Heart right ventricle (tissue), 16 donors: ENCODE measurements at regions of chr1 and their contacts with region 1.

Region 1: GRCh38 chr1:227542143-227543120 is 20.9 kb upstream of the ZNF678 start:
- DNase-seq: peak; percentile 84 to 91
- ATAC-seq: peak; percentile 95 to 97 (median 97)
- H3K4me3 ChIP-seq: peak overlapping the region; percentile 45 to 88 (median 76)
- H3K27ac ChIP-seq: peak overlapping the region; percentile 2 to 78 (median 68)
- H3K4me1 ChIP-seq: peaks cover 0 to 17% (median 12%) of the 10 kb centered on the region in 9 donors
- H3K27me3 ChIP-seq: peaks cover 0 to 7% (median 0%) of the 10 kb centered on the region in 7 donors
- CTCF ChIP-seq: peak; percentile 95 to 99 (median 99)

Region 2: GRCh38 chr1:227576189-227576588 is 33.8 kb after region 1 on chr1:
- intact Hi-C with region 1: loop called in 1 of 10 experiments (anchors 2 kb)
- DNase-seq: no peak
- ATAC-seq: peak in 3 of 8 donors; percentile 20 to 37 (median 35)
- H3K4me3 ChIP-seq: no peak overlapping the region
- H3K27ac ChIP-seq: no peak overlapping the region
- H3K4me1 ChIP-seq: peaks cover 0 to 16% (median 4%) of the 10 kb centered on the region in 9 donors
- H3K27me3 ChIP-seq: no peaks in the 10 kb centered on the region
- CTCF ChIP-seq: no peak